ENCODE measurements at regions of chr6 and their contacts with region 1.

Region 1: DNA sequence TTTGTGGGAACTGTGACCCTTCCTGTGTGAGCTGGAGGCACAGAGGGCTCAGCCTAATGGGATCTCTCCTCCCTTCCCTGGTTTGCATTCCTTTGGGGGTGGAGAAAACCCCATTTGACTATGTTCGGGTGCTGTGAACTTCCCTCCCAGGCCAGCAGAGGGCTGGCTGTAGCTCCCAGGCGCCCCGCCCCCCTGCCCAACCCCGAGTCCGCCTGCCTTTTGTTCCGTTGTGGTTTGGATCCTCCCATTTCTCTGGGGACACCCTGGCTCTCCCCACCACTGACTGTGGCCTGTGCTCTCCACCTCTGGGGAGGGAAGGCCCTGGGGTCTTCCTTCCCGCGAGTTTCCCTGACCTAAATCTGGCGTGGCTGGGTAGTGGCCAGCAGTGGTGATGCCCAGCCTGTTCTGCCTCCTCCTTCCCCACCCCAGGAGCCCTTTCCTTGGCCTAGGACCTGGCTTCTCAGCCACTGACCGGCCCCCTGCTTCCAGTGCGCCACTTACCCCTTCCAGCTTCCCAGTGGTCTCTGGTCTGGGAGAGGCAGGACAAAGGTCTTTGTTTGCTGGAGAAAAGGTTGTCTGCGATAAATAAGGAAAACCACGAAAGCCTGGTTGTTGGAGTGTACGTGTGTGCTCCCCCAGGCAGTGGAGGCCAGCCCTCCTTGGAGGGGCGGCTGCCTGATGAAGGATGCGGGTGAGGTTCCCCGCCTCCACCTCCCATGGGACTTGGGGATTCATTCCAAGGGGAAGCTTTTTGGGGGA is 4.9 kb downstream of the VEGFA start:
- DNase-seq: peak; percentile 85
- ATAC-seq: peak; percentile 46
- H3K4me3 Mint-ChIP-seq: peak overlapping the region; percentile 48
- H3K27ac Mint-ChIP-seq: peak overlapping the region; percentile 82
- H3K4me1 Mint-ChIP-seq: peaks cover 33% of the 10 kb centered on the region
- H3K27me3 Mint-ChIP-seq: peaks cover 2% of the 10 kb centered on the region; the same call in 1 of the 2 replicates
- CTCF ChIP-seq: peak; percentile 82

Region 2: GRCh38 chr6:43737272-43738081 is 37.5 kb before region 1 on chr6:
- CTCF ChIA-PET with region 1: interaction called, 11 read pairs
- POLR2A ChIA-PET with region 1: no interaction called
- DNase-seq: no peak
- ATAC-seq: peak; percentile 31
- H3K4me3 Mint-ChIP-seq: no peak overlapping the region
- H3K27ac Mint-ChIP-seq: peak overlapping the region; percentile 2; the same call in 1 of the 2 replicates
- H3K4me1 Mint-ChIP-seq: peaks cover 21% of the 10 kb centered on the region
- H3K27me3 Mint-ChIP-seq: no peaks in the 10 kb centered on the region
- CTCF ChIP-seq: no peak

Measured in WTC11 (cell line).